ENCODE measurements at regions of chr7 and their contacts with region 1.

Region 1: DNA sequence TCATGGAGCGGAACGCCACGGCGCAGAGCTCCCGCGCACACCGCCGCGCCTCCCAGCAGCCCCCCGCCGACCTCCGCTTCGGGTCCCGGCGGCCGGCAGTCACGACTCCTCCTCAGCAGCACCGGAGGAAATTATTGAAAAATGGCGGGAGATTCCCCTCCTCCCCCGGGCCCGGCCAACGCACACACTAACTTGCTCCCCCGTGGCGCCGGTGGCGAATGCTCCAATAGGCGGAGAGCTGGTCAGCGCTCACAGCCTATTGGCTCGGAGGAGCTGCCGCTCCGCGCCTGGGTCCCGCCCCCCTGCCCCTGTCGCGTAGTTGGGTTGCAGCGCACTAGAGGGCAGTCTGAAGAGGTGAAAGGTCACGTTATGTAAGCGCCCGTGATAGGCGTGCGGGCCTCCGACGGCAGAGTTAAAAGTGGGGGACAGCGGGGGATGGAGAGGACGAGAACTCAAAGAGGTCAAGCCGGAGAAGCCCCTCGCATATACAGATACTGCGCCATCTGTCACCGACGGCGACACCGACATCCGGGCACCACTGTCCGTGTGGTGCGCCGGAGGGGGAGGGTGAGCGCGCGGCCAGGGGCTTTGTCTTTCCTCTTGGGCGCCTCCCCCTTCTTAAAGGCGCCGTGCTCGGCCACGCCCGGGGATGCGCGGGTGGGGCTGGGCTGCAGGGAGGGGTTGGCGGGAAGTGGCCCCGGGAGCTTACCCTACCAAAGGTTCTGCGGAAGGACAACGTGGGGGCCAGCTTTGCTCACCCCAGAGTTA is at the start of gene BAZ1B:
- DNase-seq: peak; percentile 97
- H3K4me3 Mint-ChIP-seq: peak within 1 kb of the TSS; percentile 91
- H3K27ac Mint-ChIP-seq: peak within 1 kb of the TSS; percentile 97
- H3K4me1 Mint-ChIP-seq: peaks cover 60% of the 10 kb centered on the region
- H3K27me3 Mint-ChIP-seq: no peaks in the 10 kb centered on the region
- total RNA-seq, gene BAZ1B: 110 and 111 TPM in 2 replicates

Region 2: GRCh38 chr7:73433924-73434700 is 88.2 kb before region 1 on chr7:
- intact Hi-C with region 1: loop called (anchors 1 kb)
- DNase-seq: peak; percentile 2
- H3K4me3 Mint-ChIP-seq: peak overlapping the region; percentile 77
- H3K27ac Mint-ChIP-seq: no peak overlapping the region
- H3K4me1 Mint-ChIP-seq: no peaks in the 10 kb centered on the region
- H3K27me3 Mint-ChIP-seq: peaks cover 7% of the 10 kb centered on the region

Region 3: DNA sequence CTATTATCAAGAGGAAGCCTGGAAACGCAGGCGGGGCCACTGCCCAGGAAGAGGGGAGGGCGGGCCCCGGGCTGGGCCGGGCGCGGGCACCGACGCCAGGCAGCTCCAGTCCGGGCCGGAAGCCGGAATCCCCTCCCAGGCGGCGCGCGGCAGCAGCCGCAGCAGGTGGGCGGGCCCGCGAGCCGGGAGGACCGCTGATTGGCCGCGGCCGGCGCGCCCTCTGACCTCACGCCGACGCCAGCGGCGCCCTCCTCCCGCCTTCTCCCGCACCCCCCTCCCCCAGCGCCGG is 34.8 kb after region 1 on chr7:
- intact Hi-C with region 1: loop called (anchors 1 kb)
- DNase-seq: peak; percentile 92
- H3K4me3 Mint-ChIP-seq: peak overlapping the region; percentile 94
- H3K27ac Mint-ChIP-seq: peak overlapping the region; percentile 79
- H3K4me1 Mint-ChIP-seq: peaks cover 38% of the 10 kb centered on the region
- H3K27me3 Mint-ChIP-seq: peaks cover 8% of the 10 kb centered on the region

Region 4: DNA sequence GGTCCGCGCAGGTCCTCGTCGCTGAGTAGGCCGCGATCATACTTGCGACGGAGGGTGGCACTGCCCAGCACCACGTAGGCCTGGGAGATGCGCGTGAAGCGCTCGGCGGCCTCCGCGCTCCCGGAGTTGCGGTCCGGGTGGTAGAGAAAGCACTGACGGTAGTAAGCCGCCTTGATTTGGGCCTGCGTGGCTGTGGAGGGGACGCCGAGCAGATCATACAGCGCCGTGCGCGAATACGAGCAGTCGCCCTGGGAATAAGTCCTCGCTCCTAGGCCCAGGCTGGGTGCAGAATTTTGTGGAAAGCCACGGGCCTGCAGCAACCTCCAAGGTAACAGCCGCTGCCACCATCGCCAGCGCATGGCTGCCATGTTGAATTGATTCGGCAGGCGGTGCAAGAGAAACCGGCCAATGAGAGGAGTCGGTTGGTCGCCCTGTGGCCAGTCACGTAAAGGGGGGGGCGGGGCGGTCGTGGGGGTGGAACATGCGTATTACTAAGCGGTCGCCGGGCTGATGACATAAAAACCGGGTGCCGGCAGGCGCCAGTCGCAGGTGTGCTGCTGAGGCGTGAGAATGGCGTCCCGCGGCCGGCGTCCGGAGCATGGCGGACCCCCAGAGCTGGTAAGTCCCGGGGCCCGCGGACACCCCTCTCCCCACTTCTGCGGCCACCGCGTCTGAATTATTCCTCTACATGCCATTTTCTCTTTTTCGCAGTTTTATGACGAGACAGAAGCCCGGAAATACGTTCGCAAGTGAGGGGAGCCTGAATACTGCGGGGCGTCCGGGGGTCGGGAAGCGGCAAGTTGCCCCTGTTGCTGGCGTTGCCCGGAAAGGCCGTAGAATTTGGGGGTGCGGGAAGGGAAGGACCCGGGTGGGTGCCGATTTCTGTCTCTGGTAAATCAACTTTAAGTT is 161.0 kb after region 1 on chr7 and contains the starts of genes BUD23 and DNAJC30:
- intact Hi-C with region 1: loop called (anchors 1 kb)
- DNase-seq: peak; percentile 87
- H3K4me3 Mint-ChIP-seq: peak within 1 kb of the TSS; percentile 99
- H3K27ac Mint-ChIP-seq: peak within 1 kb of the TSS; percentile 90
- H3K4me1 Mint-ChIP-seq: peaks cover 26% of the 10 kb centered on the region
- H3K27me3 Mint-ChIP-seq: no peaks in the 10 kb centered on the region
- total RNA-seq, gene BUD23: 128 and 138 TPM in 2 replicates
- total RNA-seq, gene DNAJC30: 11.2 and 11.6 TPM in 2 replicates

Region 5: DNA sequence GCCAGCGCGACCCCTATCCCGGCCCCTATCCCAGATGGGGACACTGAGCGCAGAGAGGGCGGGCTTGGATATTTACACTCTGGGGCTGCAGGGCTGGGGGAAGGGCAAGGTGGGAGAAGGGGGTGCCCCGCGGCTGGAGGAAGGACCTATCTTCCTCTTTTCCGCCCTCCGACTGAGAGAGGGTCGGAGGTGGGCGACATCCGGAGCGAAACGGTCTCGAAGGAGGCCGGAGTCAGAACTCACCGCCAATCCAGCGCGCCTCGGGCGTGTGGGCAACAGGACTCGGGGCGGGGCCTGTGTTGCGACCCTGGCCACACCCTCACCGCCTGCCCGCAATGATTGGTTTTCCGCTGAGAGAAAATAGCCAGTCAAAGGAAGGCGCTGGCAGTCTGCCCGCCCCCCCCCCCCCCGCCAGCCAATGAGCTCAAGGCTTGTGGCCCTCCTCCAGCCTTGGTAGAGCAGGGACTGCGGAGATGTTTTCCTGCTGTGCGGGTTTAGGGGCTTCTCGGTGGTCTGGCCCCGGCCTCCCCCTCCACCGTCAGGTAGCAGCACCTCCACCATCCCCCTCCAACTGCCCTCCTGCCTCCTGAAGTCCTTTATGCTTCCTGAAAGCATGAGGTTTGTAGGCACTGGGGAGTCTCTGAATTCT is 320.1 kb after region 1 on chr7 and contains the start of gene METTL27:
- intact Hi-C with region 1: loop called (anchors 1 kb)
- DNase-seq: peak; percentile 87
- H3K4me3 Mint-ChIP-seq: peak within 1 kb of the TSS; percentile 83
- H3K27ac Mint-ChIP-seq: peak within 1 kb of the TSS; percentile 73
- H3K4me1 Mint-ChIP-seq: peaks cover 10% of the 10 kb centered on the region
- H3K27me3 Mint-ChIP-seq: peaks cover 10% of the 10 kb centered on the region
- total RNA-seq, gene METTL27: 1.2 and 1.8 TPM in 2 replicates

Measured in activated T-helper 1 cell treated with anti-CD3 and anti-CD28 coated beads, Interleukin-12 subunit alpha, Interleukin-12 subunit beta, Interleukin-2, Interleukin-4 antibody, amounts not matched to agents 30 ng/mL and 10 ng/mL and 1 ng/mL, durations not matched to agents 14 hours and 24 hours and 36 hours (primary cell).